ENCODE measurements at regions of chr16 and their contacts with region 1.

Region 1: GRCh38 chr16:4330277-4330874 is 14.5 kb downstream of the GLIS2 start:
- DNase-seq: no peak
- H3K4me3 ChIP-seq: no peak overlapping the region
- H3K27me3 ChIP-seq: no peaks in the 10 kb centered on the region
- CTCF ChIP-seq: peak; percentile 98

Region 2: DNA sequence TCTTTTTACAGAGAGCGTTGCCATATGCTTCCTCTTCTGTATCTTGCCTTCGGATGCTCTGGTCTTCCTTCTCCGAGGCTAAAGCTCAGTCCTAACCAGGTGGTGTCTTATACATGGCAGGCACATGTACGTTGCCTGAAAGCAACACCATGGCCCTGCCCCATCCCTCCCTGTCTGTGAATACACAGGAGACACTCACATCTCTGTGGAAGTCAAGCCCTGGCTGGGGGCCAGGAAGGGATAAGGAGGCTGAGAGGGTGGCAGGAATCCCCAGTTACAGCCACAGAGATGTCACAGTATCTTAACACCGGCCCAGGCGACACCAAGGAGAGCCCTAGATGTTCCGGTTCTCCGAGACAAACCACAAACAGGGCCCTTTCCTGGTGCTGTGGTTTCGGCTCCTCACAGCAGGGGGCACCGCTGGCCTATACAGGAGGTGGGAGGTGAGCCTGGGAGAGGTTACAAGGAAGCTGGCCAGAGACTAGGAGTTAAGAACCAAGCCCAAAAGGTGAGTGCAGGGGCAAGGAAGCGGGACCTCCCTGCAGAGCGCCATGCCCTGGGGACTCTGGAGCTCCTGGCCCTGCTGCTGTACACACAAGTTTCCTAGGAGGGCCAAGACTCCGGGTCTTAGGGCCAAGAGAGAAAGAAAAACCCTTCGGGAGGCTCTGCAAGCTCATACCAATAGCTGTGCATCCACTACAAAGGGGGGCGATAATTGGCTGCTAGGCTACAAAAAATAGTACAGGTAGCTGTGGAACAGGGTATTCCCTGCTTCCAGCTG is 130.2 kb before region 1 on chr16:
- CTCF ChIA-PET with region 1: interaction called, 12 read pairs
- POLR2A ChIA-PET with region 1: no interaction called
- DNase-seq: peak; percentile 7
- H3K4me3 ChIP-seq: no peak overlapping the region
- H3K27me3 ChIP-seq: no peaks in the 10 kb centered on the region
- CTCF ChIP-seq: peak; percentile 77

Region 3: DNA sequence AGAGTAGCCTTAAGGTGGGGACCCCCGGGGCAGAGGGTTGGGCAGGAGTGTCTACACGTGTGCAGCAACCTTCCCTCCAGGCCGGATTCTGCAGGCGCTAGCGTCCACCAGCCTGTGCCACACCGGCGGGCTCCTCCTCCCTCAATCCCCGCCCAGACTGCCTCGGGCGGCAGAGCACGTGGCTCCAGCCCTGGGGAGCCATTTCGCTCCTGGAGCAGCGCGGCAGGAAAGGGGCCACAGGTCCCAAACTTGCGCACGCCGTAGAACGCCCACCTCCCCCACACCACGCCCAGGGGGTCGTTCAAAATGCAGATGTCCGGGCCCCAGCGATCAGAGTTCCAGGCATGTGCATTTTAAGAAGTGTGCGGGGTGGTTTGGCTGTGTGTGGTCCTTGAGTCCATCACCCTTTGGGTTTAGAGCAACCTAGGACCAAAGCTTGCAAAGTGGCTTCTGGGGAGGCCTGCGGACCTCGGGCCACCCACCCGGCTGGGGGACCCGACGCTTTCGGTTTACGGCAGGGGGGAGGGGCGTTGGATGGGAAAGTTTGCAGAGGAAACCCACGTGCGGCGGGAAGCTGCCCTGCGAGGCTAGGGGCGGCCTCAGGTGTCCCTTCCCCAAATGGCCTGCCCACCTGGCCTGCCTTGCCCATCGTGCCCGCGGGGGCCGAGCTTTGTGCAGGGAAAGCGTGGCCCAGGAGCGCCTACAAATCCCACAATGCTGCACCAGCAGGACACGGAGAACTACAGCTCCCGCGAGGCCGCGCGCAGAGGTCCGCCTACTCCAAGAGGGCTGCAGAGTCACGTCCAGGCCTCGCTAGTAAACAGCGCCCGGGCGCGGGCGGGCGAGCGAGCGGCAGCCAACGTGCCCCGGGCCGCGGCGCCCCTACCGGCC is 59.0 kb before region 1 on chr16:
- CTCF ChIA-PET with region 1: interaction called, 16 read pairs
- POLR2A ChIA-PET with region 1: no interaction called
- DNase-seq: peak; percentile 47
- H3K4me3 ChIP-seq: peak overlapping the region; percentile 73
- H3K27me3 ChIP-seq: no peaks in the 10 kb centered on the region
- CTCF ChIP-seq: no peak

Region 4: GRCh38 chr16:4315186-4316109 is 14.9 kb before region 1 on chr16 and contains the start of gene GLIS2:
- CTCF ChIA-PET with region 1: interaction called, 106 read pairs
- POLR2A ChIA-PET with region 1: no interaction called
- DNase-seq: no peak
- H3K4me3 ChIP-seq: peak within 1 kb of the TSS; percentile 91
- H3K27me3 ChIP-seq: no peaks in the 10 kb centered on the region
- CTCF ChIP-seq: no peak
- polyA plus RNA-seq, gene GLIS2: 4.8 and 8.8 TPM in 2 replicates

Region 5: GRCh38 chr16:4373863-4374742 is 43.7 kb after region 1 on chr16:
- CTCF ChIA-PET with region 1: no interaction called
- POLR2A ChIA-PET with region 1: no interaction called
- DNase-seq: peak; percentile 91
- H3K4me3 ChIP-seq: peak overlapping the region; percentile 97
- H3K27me3 ChIP-seq: no peaks in the 10 kb centered on the region
- CTCF ChIP-seq: no peak

Region 6: GRCh38 chr16:4384509-4384942 is 54.1 kb after region 1 on chr16:
- CTCF ChIA-PET with region 1: no interaction called
- POLR2A ChIA-PET with region 1: no interaction called
- DNase-seq: no peak
- H3K4me3 ChIP-seq: no peak overlapping the region
- H3K27me3 ChIP-seq: no peaks in the 10 kb centered on the region
- CTCF ChIP-seq: no peak

Measured in BJ (cell line).